ENCODE measurements at regions of chr16 and their contacts with region 1.

Region 1: DNA sequence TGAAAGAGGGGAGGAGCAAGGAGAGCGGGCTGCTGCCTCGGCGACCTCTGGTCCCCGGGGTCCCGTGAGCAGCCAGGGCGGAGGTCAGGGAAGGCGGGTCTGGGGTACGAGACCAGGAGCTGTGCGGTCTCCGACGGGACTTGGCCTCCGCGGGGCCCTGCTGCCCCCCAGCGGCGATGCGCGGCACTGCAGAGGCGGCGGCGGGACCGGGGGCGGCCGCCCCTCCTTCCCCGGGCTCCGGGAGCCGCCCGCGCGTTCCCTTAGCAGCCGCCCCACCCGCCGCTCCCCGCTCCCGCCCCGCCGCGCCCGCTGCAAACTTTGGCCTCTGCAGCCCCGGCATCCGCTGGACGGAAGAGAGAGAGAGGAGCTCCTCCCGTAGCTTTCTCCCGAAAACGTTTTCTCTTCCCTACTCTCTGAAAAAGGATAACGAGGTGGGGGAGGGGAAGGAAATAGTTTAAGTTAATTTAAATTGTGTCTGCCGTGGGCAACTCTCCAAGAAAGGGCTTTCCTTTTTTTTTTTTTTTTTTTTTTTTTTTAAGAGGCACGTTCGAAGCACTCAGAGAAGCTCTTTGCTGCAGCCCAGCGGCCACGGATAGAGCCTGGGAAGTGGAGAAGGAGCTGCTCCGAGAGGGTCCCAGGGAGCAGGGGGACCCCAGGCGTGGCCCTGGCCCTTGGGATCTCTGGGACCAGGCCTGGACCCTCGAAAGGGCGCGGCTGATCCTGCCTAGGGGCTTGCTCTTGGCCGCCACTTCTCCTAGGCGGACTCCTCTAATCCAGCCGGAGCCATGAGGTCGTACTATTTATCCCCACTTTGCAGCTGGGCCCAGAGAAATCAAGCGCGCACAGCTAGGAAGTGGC is 43.2 kb downstream of the C16orf82 start:
- DNase-seq: peak in 8 of 10 donors; percentile 16 to 80 (median 46)
- H3K4me3 ChIP-seq: peak overlapping the region in 58 of 59 donors; percentile 6 to 60 (median 38)
- H3K27ac ChIP-seq: peak overlapping the region in 1 of 59 donors; percentile 38
- H3K27me3 ChIP-seq: peaks cover 0 to 6% (median 0%) of the 10 kb centered on the region in 45 donors
- CTCF ChIP-seq: peak in 55 of 56 donors; percentile 49 to 97 (median 85)

Region 2: DNA sequence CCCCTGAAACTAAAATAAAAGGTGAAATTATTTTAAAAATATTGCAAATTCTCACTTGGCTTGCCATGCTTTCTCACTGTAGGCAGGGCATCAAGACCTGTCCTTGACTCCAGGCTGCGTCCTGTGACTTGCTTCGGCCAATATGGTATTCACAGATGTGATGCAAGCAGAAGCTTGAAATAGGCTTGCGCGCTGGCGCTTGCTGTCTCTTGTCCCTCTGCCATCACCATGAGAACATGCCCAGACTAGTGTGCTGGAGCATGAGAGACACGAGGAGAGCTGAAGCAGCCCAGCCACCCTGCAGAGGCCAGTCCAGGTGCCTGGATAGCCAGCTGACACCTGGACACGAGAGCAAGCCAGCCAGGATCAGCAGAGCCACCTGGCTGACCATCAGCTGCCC is 1830.4 kb before region 1 on chr16:
- intact Hi-C with region 1: loop called in 1 of 2 experiments (anchors 5 kb)
- DNase-seq: no peak
- H3K4me3 ChIP-seq: no peak overlapping the region
- H3K27ac ChIP-seq: no peak overlapping the region
- H3K27me3 ChIP-seq: peaks cover 0 to 5% (median 0%) of the 10 kb centered on the region in 45 donors
- CTCF ChIP-seq: no peak

Region 3: DNA sequence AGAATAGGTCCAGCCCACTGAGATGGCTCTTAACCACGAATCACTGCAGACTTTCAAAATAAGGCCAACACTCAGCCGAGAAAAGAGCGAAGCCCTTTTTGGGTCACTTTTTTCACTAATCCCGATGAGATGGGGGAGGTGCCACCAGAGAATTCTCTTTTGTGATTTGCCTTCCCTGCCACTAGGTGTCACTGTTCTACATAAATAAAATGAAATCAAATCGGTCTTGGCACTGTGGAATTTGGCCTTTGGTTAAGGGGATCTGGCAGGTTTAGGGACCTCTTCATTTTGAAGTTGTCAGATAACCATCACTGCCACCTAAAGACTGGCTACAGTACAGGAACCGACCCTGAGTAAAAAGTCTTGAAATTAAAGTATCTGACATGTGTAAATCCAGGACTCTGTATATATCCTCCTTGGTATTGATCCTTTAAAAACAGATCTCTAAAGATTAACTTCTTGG is 1271.1 kb before region 1 on chr16:
- intact Hi-C with region 1: loop called in 1 of 2 experiments (anchors 2 kb)
- DNase-seq: peak in 2 of 10 donors; percentile 6 to 36
- H3K4me3 ChIP-seq: peak overlapping the region in 19 of 59 donors; percentile 3 to 49 (median 25)
- H3K27ac ChIP-seq: no peak overlapping the region
- H3K27me3 ChIP-seq: no peaks in the 10 kb centered on the region
- CTCF ChIP-seq: peak; percentile 70 to 90 (median 82)

Region 4: GRCh38 chr16:26913851-26914250 is 196.0 kb before region 1 on chr16:
- intact Hi-C with region 1: no loop called
- DNase-seq: no peak
- H3K4me3 ChIP-seq: no peak overlapping the region
- H3K27ac ChIP-seq: no peak overlapping the region
- H3K27me3 ChIP-seq: peaks cover 0 to 5% (median 0%) of the 10 kb centered on the region in 45 donors
- CTCF ChIP-seq: peak in 3 of 56 donors; percentile 9 to 21 (median 11)

Measured in dorsolateral prefrontal cortex (tissue), 120 donors.